Heart right ventricle (tissue), 16 donors: ENCODE measurements at regions of chr2 and their contacts with region 1.

Region 1: DNA sequence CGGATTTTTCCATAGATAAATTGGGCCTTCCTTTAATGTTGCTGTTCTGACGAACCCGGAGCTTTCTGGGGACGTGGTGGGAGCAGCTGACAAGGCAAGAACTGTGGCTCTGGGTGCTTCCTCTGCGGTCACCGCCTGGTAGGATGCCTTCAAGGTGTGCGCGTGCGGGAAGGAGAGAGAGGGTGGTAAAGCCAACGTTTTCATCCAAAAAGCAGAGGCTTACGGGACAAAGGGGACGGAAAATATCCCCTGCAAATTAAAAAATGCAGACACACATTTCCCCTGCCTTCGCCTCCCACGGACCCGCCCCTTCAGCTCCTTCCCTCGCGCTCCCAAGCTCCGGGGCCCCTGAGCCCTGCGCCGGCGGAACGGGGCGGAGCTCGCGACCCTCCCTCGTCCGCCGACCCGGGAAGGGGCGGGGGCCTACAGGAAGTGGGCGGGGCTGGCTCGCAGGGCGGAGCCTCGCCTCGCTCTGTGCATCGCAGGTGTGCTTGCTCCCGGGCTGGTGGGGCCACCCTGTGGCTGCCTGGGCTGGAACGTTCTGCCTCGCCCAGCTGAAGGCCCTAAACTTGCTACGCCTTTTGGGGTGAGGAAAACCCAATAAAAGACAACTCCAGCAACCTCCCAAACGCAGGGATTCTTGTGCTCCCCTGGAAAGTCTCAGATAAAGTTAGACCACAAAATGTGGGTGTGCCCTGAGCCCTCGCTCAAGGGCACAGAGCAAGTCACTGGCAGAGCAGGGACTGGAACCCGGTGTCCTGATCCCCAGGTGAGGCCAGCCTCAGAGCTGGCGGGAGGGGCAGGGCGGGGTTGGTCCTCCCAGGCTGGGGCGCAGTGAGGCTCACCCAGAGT is 25.4 kb upstream of the SLC66A3 start:
- DNase-seq: peak in 1 of 2 donors; percentile 62
- ATAC-seq: peak; percentile 18 to 45 (median 29)
- H3K4me3 ChIP-seq: peak overlapping the region in 9 of 10 donors; percentile 12 to 51 (median 44)
- H3K27ac ChIP-seq: peak overlapping the region in 6 of 10 donors; percentile 19 to 65 (median 34)
- H3K4me1 ChIP-seq: peaks cover 9 to 43% (median 23%) of the 10 kb centered on the region in 9 donors
- H3K27me3 ChIP-seq: peaks cover 0 to 15% (median 0%) of the 10 kb centered on the region in 7 donors
- CTCF ChIP-seq: peak in 5 of 9 donors; percentile 20 to 42 (median 33)

Region 2: DNA sequence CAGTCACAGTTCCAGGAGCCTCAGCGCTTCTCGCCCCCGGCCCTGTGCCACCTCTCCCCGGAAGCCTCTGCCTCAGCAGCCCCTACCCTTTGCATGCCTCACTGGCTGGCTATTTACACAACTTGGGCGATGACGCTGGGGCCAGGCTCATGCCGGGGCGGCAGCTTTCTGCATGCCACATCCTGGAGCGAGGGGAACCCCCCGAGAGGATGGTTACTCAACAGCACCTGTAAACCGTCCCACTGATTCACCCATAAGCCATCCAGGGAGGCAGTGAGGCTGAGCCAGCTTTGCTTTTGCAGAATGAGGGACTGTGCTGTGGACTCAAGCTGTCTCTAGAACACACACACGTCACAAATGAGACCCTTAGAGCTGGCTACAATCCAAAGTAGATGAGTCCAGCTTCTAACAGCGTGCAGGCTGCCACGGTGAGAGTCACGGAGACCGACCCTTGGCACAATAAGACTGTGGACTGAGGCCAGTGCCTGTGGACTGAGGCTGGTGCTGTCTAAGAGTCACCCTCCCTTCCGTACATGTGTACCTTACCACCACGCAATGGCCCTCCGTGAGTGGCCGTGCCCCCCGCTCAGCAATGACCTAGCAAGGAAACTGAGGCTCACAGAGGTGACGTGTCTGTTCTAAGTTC is 636.1 kb before region 1 on chr2:
- intact Hi-C with region 1: no loop called
- DNase-seq: no peak
- ATAC-seq: peak in 2 of 8 donors; percentile 22 to 58
- H3K4me3 ChIP-seq: no peak overlapping the region
- H3K27ac ChIP-seq: no peak overlapping the region
- H3K4me1 ChIP-seq: no peaks in the 10 kb centered on the region
- H3K27me3 ChIP-seq: peaks cover 0 to 38% (median 14%) of the 10 kb centered on the region in 7 donors
- CTCF ChIP-seq: no peak

Region 3: GRCh38 chr2:11154923-11155380 is 25.1 kb after region 1 on chr2:
- intact Hi-C with region 1: loop called in 1 of 10 experiments (anchors 2 kb)
- DNase-seq: peak; percentile 99
- ATAC-seq: peak; percentile 93 to 97 (median 95)
- H3K4me3 ChIP-seq: peak overlapping the region; percentile 41 to 99 (median 84)
- H3K27ac ChIP-seq: peak overlapping the region; percentile 64 to 98 (median 94)
- H3K4me1 ChIP-seq: peaks cover 0 to 27% (median 19%) of the 10 kb centered on the region in 9 donors
- H3K27me3 ChIP-seq: no peaks in the 10 kb centered on the region
- CTCF ChIP-seq: no peak

Region 4: DNA sequence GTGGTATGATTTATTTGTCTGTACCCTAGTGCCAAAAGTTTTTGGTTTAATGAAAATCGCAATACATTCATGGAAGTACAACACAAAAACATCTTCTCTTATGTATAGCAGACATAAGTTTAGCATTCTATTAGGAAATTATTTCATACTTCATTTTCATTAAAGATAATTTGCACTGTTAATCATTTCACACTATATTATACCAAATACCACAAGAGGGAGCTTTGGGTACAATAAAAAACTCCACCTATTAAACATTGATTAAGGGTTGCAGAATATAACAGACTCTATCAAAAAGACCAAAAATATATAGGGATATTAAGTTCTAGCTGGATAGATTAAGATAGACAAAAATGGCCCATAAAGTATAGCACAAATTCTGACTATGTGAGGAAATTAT is 104.5 kb after region 1 on chr2:
- intact Hi-C with region 1: loop called in 1 of 10 experiments (anchors 5 kb)
- DNase-seq: no peak
- ATAC-seq: peak in 4 of 8 donors; percentile 37 to 51 (median 46)
- H3K4me3 ChIP-seq: no peak overlapping the region
- H3K27ac ChIP-seq: no peak overlapping the region
- H3K4me1 ChIP-seq: peaks cover 0 to 29% (median 16%) of the 10 kb centered on the region in 9 donors
- H3K27me3 ChIP-seq: no peaks in the 10 kb centered on the region
- CTCF ChIP-seq: peak; percentile 41 to 75 (median 57)

Region 5: DNA sequence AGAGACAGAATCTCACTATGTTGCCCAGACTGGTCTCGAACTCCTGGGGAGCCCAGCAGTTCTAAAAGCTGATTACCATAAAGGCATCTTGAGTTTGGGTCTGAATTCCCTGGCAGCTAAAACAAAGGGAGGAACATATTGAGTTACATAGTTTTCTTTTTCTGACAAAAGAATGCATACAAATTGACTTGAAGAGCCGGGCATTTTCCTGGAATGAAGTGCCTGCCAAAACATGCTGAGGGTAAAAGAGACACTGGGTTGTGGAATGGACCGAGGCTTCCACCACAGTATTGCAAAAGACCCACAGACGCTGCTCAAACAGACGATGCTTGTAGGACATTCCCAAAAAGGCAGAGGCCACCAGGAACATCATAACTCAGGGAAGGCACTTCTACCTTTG is 249.7 kb after region 1 on chr2:
- intact Hi-C with region 1: no loop called
- DNase-seq: no peak
- ATAC-seq: no peak
- H3K4me3 ChIP-seq: no peak overlapping the region
- H3K27ac ChIP-seq: no peak overlapping the region
- H3K4me1 ChIP-seq: peaks cover 6 to 33% (median 19%) of the 10 kb centered on the region in 9 donors
- H3K27me3 ChIP-seq: no peaks in the 10 kb centered on the region
- CTCF ChIP-seq: no peak

Region 6: DNA sequence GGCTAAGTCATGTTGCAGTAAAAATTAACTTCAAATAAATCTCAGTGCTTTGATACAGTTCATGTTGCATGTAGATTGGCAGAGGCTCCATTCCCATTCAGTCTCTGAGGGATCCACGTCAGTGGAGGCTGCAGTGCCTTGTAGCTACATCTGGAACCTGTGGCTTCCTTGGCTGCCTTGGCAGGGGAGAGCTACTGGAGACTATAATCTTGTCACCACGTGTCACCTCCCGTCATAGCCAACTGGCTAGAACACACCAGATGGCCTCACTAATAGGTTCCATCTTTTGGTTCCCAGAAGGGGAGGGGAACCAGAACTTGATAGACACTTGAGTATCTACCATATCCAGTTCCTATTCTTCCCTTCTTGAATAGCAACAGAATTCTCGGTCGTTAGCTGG is 307.8 kb after region 1 on chr2:
- intact Hi-C with region 1: loop called in 7 of 10 experiments (anchors 5 to 10 kb)
- DNase-seq: no peak
- ATAC-seq: peak in 2 of 8 donors; percentile 50 to 53
- H3K4me3 ChIP-seq: no peak overlapping the region
- H3K27ac ChIP-seq: no peak overlapping the region
- H3K4me1 ChIP-seq: no peaks in the 10 kb centered on the region
- H3K27me3 ChIP-seq: no peaks in the 10 kb centered on the region
- CTCF ChIP-seq: no peak

Region 7: GRCh38 chr2:11477994-11478393 is 348.2 kb after region 1 on chr2:
- intact Hi-C with region 1: loop called in 1 of 10 experiments (anchors 10 kb)
- DNase-seq: peak; percentile 78 to 90
- ATAC-seq: peak in 6 of 8 donors; percentile 39 to 79 (median 76)
- H3K4me3 ChIP-seq: no peak overlapping the region
- H3K27ac ChIP-seq: no peak overlapping the region
- H3K4me1 ChIP-seq: peaks cover 0 to 6% (median under 1%) of the 10 kb centered on the region in 9 donors
- H3K27me3 ChIP-seq: peaks cover 0 to 41% (median 11%) of the 10 kb centered on the region in 7 donors
- CTCF ChIP-seq: peak; percentile 76 to 92 (median 90)